ENCODE measurements at regions of chr6 and their contacts with region 1.

Region 1: DNA sequence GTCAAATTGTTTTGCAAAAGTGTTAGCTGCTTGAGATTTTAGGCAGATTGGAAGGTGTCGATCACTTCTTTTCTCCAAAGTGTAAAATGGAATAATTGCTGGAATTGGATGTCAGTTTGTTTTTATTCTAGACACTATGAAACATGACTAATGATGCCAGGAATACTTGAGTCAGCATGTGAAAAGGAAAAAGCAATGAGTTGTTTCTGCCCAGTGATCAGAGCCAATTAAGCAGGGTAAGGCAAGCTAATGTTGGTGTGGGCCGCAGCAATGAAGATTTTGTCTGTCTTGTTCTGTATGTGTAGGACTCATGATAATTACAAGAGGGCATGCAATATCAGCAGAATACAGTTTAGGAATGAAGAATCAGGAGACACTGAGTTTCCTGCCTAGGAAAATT is 110.3 kb downstream of the CARMIL1 start:
- DNase-seq: no peak
- H3K4me3 ChIP-seq: peak overlapping the region; percentile 60
- H3K27ac ChIP-seq: peak overlapping the region; percentile 99
- H3K4me1 ChIP-seq: peaks cover 94% of the 10 kb centered on the region
- CTCF ChIP-seq: no peak

Region 2: GRCh38 chr6:25278914-25279747 is 110.3 kb before region 1 on chr6 and contains the start of gene CARMIL1:
- CTCF ChIA-PET with region 1: no interaction called
- POLR2A ChIA-PET with region 1: interaction called, 14 read pairs
- intact Hi-C with region 1: loop called (anchors 1 kb)
- DNase-seq: peak; percentile 89
- H3K4me3 ChIP-seq: peak within 1 kb of the TSS; percentile 99
- H3K27ac ChIP-seq: peak within 1 kb of the TSS; percentile 47
- H3K4me1 ChIP-seq: peaks cover 52% of the 10 kb centered on the region
- CTCF ChIP-seq: peak; percentile 81
- total RNA-seq, gene CARMIL1: 21.8 and 25.5 TPM in 2 replicates

Region 3: DNA sequence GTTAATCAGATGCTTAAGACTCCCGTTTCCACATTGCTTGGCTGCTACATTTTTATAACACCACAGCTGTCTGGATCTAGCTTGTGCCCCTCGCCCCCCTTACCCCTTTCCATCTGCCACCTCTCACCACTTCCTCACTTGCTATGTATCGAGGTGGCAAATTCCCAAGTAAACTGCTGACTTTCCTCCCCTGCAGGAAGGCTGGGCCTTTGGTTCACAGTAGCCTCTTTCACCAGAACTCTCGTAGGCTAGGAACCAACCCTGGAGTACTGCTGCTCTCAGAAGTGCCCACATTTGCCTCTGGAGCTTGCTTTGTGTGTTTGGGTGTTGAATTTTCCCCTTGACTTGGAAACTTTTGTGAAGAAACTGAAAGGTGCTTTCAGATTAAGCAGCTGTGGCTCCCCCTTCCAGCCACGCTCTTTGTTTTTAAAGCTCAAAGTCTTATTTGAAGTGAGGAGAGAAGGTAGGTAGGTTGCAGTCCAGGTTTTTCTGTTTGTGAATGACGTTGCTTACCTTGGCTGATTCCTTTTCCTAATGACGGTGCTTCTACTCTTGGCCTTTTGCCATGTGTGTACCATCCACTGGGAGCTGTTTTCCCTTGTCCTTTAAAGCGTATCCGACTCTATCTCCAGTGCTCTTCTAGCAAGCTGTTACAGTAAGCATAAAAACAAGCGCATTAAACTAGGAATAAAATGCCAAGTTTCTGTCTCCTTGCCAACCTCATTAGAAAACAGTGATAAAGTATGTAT is 19.9 kb before region 1 on chr6:
- CTCF ChIA-PET with region 1: interaction called, 4 read pairs
- POLR2A ChIA-PET with region 1: interaction called, 128 read pairs
- intact Hi-C with region 1: loop called (anchors 1 kb)
- DNase-seq: peak; percentile 59
- H3K4me3 ChIP-seq: peak overlapping the region; percentile 65
- H3K27ac ChIP-seq: peak overlapping the region; percentile 87
- H3K4me1 ChIP-seq: peaks cover 90% of the 10 kb centered on the region
- CTCF ChIP-seq: 0 out of 2 replicates have a peak, but pooled peaks have one; percentile 16

Region 4: GRCh38 chr6:25404693-25405169 is 15.3 kb after region 1 on chr6:
- CTCF ChIA-PET with region 1: interaction called, 4 read pairs
- POLR2A ChIA-PET with region 1: interaction called, 233 read pairs
- intact Hi-C with region 1: loop called (anchors 1 kb)
- DNase-seq: peak; percentile 89
- H3K4me3 ChIP-seq: peak overlapping the region; percentile 63
- H3K27ac ChIP-seq: peak overlapping the region; percentile 98
- H3K4me1 ChIP-seq: peaks cover 98% of the 10 kb centered on the region
- CTCF ChIP-seq: no peak

Region 5: DNA sequence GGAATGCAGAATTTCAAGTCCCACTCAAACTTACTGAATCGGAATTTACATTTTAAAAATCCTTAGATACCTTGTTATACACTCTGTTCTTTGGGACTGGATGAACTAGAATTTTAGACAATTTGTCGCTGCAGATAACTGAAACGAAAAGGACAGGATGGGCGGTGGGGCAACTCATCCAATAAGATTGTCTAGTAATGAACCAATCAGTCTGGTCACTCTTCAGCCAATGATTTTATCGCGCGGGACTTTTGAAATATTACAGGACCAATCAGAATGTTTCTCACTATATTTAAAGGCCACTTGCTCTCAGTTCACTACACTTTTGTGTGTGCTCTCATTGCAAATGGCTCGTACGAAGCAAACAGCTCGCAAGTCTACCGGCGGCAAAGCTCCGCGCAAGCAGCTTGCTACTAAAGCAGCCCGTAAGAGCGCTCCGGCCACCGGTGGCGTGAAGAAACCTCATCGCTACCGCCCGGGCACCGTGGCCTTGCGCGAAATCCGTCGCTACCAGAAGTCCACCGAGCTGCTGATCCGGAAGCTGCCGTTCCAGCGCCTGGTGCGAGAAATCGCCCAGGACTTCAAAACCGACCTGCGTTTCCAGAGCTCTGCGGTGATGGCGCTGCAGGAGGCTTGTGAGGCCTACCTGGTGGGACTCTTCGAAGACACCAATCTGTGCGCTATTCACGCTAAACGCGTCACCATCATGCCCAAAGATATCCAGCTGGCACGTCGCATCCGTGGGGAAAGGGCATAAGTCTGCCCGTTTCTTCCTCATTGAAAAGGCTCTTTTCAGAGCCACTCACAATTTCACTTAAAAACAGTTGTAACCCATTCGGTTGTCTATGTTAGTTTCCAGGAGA is 655.8 kb after region 1 on chr6:
- CTCF ChIA-PET with region 1: no interaction called
- POLR2A ChIA-PET with region 1: interaction called, 10 read pairs
- intact Hi-C with region 1: no loop called
- DNase-seq: peak; percentile 97
- H3K4me3 ChIP-seq: peak overlapping the region; percentile 67
- H3K27ac ChIP-seq: peak overlapping the region; percentile 99
- H3K4me1 ChIP-seq: peaks cover 66% of the 10 kb centered on the region
- CTCF ChIP-seq: peak; percentile 54

Measured in OCI-LY7 (cell line).